Transverse colon (tissue), 4 donors: ENCODE measurements at regions of chr12 and their contacts with region 1.

Region 1: GRCh38 chr12:64714551-64714968 is 44.6 kb downstream of the GNS start:
- DNase-seq: no peak
- H3K4me3 ChIP-seq: no peak overlapping the region
- H3K27ac ChIP-seq: no peak overlapping the region
- H3K4me1 ChIP-seq: no peaks in the 10 kb centered on the region
- H3K27me3 ChIP-seq: no peaks in the 10 kb centered on the region
- CTCF ChIP-seq: no peak
- EP300 ChIP-seq: no peak
- POLR2A ChIP-seq: no peak

Region 2: GRCh38 chr12:64431791-64432190 is 282.8 kb before region 1 on chr12:
- in situ Hi-C with region 1: loop called in 1 of 4 experiments (anchors 25 kb)
- intact Hi-C with region 1: no loop called
- DNase-seq: no peak
- H3K4me3 ChIP-seq: no peak overlapping the region
- H3K27ac ChIP-seq: no peak overlapping the region
- H3K4me1 ChIP-seq: no peaks in the 10 kb centered on the region
- H3K27me3 ChIP-seq: no peaks in the 10 kb centered on the region
- CTCF ChIP-seq: no peak
- EP300 ChIP-seq: no peak
- POLR2A ChIP-seq: no peak

Region 3: DNA sequence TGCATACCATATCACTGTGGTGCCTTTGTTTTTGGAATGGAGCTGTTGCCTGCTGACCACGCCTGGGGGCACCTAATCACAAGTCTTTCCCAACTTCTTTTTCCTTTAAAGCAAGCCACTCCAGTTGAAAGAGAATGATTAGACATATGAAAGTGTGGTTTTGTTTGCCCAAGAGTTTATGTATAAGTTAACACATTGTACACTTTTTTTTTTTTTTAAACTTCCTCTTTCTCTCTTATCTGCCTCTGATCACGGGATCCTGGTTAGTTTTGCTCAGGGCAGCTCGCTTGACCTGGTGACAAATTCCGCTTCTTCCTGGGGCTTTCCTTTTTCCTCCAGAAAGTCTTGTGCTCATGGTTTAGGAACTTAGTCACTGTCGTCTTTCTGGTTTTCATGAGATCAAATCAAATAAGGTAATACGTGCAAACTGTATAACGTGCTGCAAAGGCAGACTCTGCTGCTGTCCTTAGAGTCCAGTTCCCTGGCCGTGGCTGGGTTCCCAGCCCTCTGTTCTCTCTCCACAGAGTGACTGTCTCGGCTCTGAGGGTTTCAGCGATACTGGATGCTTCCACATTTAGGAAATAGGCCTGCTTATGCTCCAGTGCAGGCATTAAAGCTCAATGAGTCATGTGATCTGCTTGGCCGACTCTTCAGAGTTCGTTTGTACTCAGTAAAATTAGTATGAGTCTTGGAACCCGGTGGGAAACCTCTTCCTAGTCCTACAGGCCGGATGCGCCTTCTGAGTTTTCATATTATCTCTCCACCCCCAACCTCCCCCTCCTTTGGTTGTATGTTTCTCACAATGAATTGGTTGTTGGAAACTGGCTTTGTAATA is 89.1 kb before region 1 on chr12:
- in situ Hi-C with region 1: no loop called
- intact Hi-C with region 1: no loop called
- DNase-seq: peak; percentile 54
- H3K4me3 ChIP-seq: peak overlapping the region in 2 of 4 donors; percentile 12 to 44
- H3K27ac ChIP-seq: peak overlapping the region; percentile 84 to 95 (median 87)
- H3K4me1 ChIP-seq: peaks cover 32 to 84% (median 44%) of the 10 kb centered on the region in 4 donors
- H3K27me3 ChIP-seq: no peaks in the 10 kb centered on the region
- CTCF ChIP-seq: no peak
- EP300 ChIP-seq: peak; percentile 9
- POLR2A ChIP-seq: peak; percentile 39